Mammary epithelial cell (primary cell): ENCODE measurements at regions of chr9 and their contacts with region 1.

Region 1: GRCh38 chr9:77632652-77633051 is 15.5 kb downstream of the GNA14 start:
- DNase-seq: no peak
- H3K4me3 ChIP-seq: no peak overlapping the region
- H3K27ac ChIP-seq: no peak overlapping the region
- H3K4me1 ChIP-seq: no peaks in the 10 kb centered on the region
- H3K27me3 ChIP-seq: peaks cover 3% of the 10 kb centered on the region
- CTCF ChIP-seq: no peak

Region 2: DNA sequence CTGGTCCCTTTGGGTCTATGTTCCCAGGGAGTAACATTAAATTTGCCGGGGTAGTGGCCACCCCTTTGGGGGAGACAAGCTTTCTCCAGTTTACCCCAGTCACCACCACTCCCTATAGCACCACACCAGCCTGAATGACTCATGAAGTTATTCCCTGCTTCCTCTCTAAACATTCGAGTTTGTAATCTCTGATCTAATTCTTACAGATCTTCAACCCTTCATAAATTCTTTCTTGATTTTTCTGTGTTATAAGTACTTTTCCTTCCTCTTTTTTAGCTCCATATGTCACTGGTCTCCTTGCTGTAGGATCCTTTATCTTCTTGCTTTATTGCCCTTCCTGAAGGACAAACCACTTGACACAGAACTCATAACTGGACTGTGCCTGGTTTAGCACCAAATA is 40.2 kb before region 1 on chr9:
- CTCF ChIA-PET with region 1: no interaction called
- dilution Hi-C with region 1: loop called (anchors 5 kb)
- in situ Hi-C with region 1: no loop called
- intact Hi-C with region 1: no loop called
- DNase-seq: no peak
- H3K4me3 ChIP-seq: no peak overlapping the region
- H3K27ac ChIP-seq: no peak overlapping the region
- H3K4me1 ChIP-seq: peaks cover 12% of the 10 kb centered on the region
- H3K27me3 ChIP-seq: no peaks in the 10 kb centered on the region
- CTCF ChIP-seq: no peak

Region 3: DNA sequence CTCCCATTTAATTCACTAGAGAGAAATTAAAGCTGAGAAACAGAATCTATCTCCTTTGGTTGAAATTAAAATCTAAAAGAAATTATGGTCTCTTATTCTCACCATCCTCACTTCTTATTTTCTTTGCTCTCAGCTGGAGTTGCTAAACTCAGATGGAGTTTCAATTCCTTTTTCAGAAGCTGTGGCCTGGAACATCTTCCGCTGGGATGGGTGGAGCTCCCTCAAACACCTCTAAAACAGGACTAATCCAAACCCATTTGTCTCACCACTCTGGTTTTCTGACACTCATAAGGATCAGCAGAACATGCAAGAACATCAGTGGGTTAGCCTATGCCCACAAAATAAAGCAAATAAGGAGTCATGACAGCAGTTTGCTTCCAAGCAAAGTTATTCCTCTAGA is 563.6 kb after region 1 on chr9:
- CTCF ChIA-PET with region 1: no interaction called
- dilution Hi-C with region 1: no loop called
- in situ Hi-C with region 1: no loop called
- intact Hi-C with region 1: no loop called
- DNase-seq: no peak
- H3K4me3 ChIP-seq: no peak overlapping the region
- H3K27ac ChIP-seq: no peak overlapping the region
- H3K4me1 ChIP-seq: no peaks in the 10 kb centered on the region
- H3K27me3 ChIP-seq: no peaks in the 10 kb centered on the region
- CTCF ChIP-seq: no peak